ENCODE measurements at regions of chr14 and their contacts with region 1.

Region 1: GRCh38 chr14:23804817-23805216 is 148.8 kb upstream of the DHRS4 start:
- DNase-seq: no peak
- H3K4me3 ChIP-seq: no peak overlapping the region
- H3K27ac ChIP-seq: no peak overlapping the region
- H3K4me1 ChIP-seq: no peaks in the 10 kb centered on the region
- H3K27me3 ChIP-seq: no peaks in the 10 kb centered on the region
- CTCF ChIP-seq: no peak

Region 2: DNA sequence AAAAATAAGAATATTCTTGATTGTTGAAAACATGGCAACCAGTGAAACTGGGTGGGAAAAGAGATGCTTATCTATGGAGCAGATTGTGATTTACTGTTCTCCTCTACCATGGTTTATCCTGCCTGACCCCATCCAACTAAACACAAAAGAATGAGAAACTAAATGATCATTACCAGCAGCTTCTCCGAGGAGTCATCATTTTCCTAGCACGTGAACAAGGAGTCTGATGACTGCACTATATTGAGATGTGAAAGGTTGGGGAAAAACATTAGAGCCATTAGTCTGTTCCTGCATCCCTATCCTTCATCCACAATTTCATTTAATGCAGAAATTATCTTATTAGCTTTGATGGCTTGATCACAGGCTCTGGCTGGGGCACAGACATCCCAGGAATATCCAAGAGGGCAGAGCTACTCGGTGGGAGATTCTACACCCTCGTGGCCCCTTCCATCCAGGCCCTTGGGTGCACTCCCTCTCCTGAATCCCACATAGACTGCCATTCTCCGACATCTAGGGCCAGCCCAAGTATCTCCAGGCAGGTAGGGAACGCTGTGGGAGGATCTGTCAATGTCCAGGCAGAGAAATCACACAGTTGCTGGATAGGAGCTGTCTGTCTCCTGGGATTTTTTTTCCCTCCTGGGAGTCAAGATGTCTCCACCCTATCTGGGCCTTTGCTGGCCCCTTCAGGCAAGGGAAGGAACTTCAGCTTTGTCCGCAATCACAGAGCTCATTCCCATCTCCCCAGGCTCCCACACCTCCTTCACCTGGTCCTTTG is 105.5 kb after region 1 on chr14:
- CTCF ChIA-PET with region 1: no interaction called
- POLR2A ChIA-PET with region 1: interaction called, 10 read pairs
- intact Hi-C with region 1: no loop called
- DNase-seq: peak in 1 of 2 experiments; percentile 56
- H3K4me3 ChIP-seq: no peak overlapping the region
- H3K27ac ChIP-seq: no peak overlapping the region
- H3K4me1 ChIP-seq: no peaks in the 10 kb centered on the region
- H3K27me3 ChIP-seq: no peaks in the 10 kb centered on the region
- CTCF ChIP-seq: peak; percentile 78

Measured in PC-9 (cell line).